Vagina (tissue), 2 donors: ENCODE measurements at regions of chr3 and their contacts with region 1.

Region 1: GRCh38 chr3:177578488-177578887 is 381.2 kb upstream of the TBL1XR1 start:
- DNase-seq: no peak
- H3K4me3 ChIP-seq: no peak overlapping the region
- H3K27ac ChIP-seq: no peak overlapping the region
- H3K4me1 ChIP-seq: no peaks in the 10 kb centered on the region
- H3K27me3 ChIP-seq: no peaks in the 10 kb centered on the region
- CTCF ChIP-seq: no peak
- POLR2A ChIP-seq: no peak

Region 2: DNA sequence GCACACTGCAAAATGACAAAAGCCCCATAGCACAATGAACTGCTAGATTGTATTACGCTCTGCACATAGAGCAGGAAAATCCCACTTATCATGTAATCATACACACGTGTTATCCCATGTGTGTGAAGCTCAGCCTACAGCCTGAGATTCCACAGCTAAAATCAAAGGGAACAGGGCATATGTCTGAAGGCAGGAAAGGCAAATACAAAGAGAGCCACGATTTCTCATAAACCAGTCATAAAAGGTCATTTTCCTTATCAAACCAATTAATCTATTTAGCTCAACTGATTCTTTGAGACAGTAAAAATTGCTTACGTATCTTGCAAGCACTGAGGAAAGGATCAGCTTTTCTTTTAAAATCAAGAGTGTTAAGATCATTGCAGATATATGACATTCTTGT is 181.8 kb before region 1 on chr3:
- intact Hi-C with region 1: no loop called
- DNase-seq: no peak
- H3K4me3 ChIP-seq: no peak overlapping the region
- H3K27ac ChIP-seq: no peak overlapping the region
- H3K4me1 ChIP-seq: no peaks in the 10 kb centered on the region
- H3K27me3 ChIP-seq: no peaks in the 10 kb centered on the region
- CTCF ChIP-seq: no peak
- POLR2A ChIP-seq: no peak

Region 3: GRCh38 chr3:178500631-178501030 is 922.1 kb after region 1 on chr3:
- intact Hi-C with region 1: loop called (anchors 5 kb)
- DNase-seq: no peak
- H3K4me3 ChIP-seq: no peak overlapping the region
- H3K27ac ChIP-seq: no peak overlapping the region
- H3K4me1 ChIP-seq: no peaks in the 10 kb centered on the region
- H3K27me3 ChIP-seq: no peaks in the 10 kb centered on the region
- CTCF ChIP-seq: no peak
- POLR2A ChIP-seq: no peak